ENCODE measurements at regions of chr16 and their contacts with region 1.

Region 1: GRCh38 chr16:70666336-70666735 is 19.5 kb downstream of the MTSS2 start:
- DNase-seq: no peak
- H3K4me3 ChIP-seq: no peak overlapping the region
- H3K27ac ChIP-seq: no peak overlapping the region
- H3K4me1 ChIP-seq: no peaks in the 10 kb centered on the region
- H3K27me3 ChIP-seq: no peaks in the 10 kb centered on the region
- CTCF ChIP-seq: no peak

Region 2: DNA sequence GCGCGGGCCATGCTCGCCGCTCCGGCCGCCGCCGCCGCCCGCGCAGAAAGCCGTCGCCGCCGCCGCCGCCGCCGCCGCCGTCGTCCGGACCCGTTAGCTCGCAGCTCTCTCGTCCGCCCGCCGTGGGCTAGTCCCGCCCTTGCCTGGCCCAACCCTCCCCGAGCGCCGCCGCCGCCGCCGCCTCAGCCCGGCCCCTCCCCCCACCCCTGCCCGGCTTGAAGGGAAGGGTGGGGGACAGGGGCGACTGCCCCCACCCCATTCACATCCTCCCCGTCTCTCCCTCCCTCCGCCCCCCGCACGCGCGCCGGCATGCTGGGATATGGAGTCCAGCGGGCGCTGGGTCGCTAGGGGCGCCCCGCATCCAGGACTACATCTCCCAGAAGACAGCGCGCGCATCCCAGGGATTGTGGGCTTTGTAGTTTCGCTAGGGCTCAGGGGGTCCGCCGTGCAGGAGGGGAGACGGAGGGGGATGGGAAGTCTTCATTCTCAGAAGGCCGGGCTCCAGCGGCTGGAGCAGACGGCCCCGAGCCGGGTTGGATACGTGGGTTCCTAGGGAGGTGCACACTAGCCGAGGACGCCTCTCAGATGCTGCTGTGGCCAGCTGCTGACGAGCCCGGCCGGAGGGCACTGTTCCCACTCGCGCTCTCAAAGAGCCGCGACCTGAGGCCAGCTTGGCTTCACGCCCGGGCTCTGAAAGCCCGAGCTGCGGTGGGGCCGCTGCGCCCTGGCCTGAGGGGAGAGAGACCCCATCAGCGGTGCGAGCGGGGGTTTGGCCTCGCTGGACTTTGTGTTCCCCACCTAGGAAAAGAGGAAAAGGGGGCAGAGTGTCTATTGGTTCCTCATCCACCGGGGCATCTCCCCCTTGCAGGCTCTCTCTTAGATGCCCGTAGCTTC is 227.1 kb before region 1 on chr16 and contains the start of gene ST3GAL2:
- CTCF ChIA-PET with region 1: no interaction called
- dilution Hi-C with region 1: no loop called
- in situ Hi-C with region 1: no loop called
- intact Hi-C with region 1: no loop called
- DNase-seq: peak; percentile 88
- H3K4me3 ChIP-seq: peak within 1 kb of the TSS; percentile 53 to 66 (median 60)
- H3K27ac ChIP-seq: no peak within 1 kb of the TSS
- H3K4me1 ChIP-seq: peaks cover 20% of the 10 kb centered on the region
- H3K27me3 ChIP-seq: no peaks in the 10 kb centered on the region
- CTCF ChIP-seq: no peak
- total RNA-seq, gene ST3GAL2: 14.0 to 14.5 TPM

Region 3: DNA sequence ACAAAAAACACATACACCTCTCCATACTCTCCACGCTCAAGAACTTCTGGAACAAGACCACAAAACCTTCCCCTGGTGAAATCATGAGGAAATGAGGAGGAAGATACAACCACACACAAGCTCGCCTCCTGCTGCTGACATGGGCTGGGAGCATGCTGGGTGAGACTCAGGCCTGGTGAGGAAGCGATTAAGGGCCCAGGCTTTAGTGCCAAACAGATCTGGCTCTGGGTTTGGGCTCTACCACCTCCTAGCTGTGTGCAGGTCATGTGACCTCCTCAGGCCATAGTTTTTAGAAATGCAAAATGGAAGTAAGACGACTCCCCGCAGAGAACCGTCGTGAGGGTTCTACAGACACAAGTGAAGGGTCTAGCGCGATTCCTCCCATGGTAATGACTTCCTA is 93.3 kb after region 1 on chr16:
- CTCF ChIA-PET with region 1: interaction called, 17 read pairs
- dilution Hi-C with region 1: no loop called
- in situ Hi-C with region 1: no loop called
- intact Hi-C with region 1: no loop called
- DNase-seq: no peak
- H3K4me3 ChIP-seq: no peak overlapping the region
- H3K27ac ChIP-seq: no peak overlapping the region
- H3K4me1 ChIP-seq: peaks cover 16% of the 10 kb centered on the region
- H3K27me3 ChIP-seq: no peaks in the 10 kb centered on the region
- CTCF ChIP-seq: no peak

Measured in mammary epithelial cell (primary cell).